ENCODE measurements at regions of chr6 and their contacts with region 1.

Region 1: GRCh38 chr6:34656378-34657036 is 40.1 kb downstream of the ILRUN start:
- DNase-seq: no peak
- H3K4me3 ChIP-seq: peak overlapping the region in 1 of 3 donors; percentile 18
- H3K27ac ChIP-seq: peak overlapping the region; percentile 90 to 97 (median 92)
- H3K4me1 ChIP-seq: peaks cover 38 to 50% of the 10 kb centered on the region in 2 donors
- H3K27me3 ChIP-seq: no peaks in the 10 kb centered on the region
- CTCF ChIP-seq: no peak
- POLR2A ChIP-seq: no peak

Region 2: GRCh38 chr6:34696739-34697543 is 40.4 kb after region 1 on chr6 and contains the start of gene ILRUN:
- intact Hi-C with region 1: loop called (anchors 5 kb)
- DNase-seq: peak; percentile 93 to 96
- H3K4me3 ChIP-seq: peak within 1 kb of the TSS; percentile 18 to 90 (median 76)
- H3K27ac ChIP-seq: peak within 1 kb of the TSS; percentile 62 to 96 (median 89)
- H3K4me1 ChIP-seq: peaks cover 33 to 36% of the 10 kb centered on the region in 2 donors
- H3K27me3 ChIP-seq: no peaks in the 10 kb centered on the region
- CTCF ChIP-seq: no peak
- POLR2A ChIP-seq: peak; percentile 35 to 86
- total RNA-seq, gene ILRUN: 76.5 to 107 (median 89.0) TPM

Region 3: DNA sequence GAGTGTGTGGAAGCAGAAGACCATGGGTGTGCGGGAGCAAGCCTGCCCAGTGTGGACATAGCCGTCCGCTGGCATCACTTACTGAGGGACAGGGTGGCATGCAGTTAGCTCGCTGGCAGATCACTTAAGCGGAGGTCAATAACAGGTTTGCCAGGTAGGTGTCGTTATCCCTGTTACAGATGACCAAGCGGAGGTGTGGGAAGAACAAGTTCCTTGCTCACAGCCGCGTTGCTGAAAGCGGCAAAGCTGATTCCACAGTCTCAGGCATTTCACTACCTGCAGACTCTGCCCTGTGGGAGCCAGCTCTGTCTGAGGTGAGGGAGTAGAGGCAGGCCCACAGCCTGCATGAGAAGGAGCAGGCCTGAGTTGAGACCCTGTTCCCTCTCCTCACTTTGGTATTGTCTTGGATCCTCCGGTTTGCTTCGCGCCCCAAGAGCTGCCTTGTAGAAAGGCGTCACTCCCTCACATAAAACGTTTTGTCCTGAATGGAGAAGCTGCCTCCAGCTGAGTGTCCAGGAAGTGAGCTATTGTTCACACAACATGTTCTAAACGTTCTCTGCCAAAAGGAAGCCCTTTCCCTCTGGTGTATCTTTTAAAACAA is 387.7 kb after region 1 on chr6:
- intact Hi-C with region 1: no loop called
- DNase-seq: peak; percentile 78 to 81
- H3K4me3 ChIP-seq: no peak overlapping the region
- H3K27ac ChIP-seq: peak overlapping the region; percentile 49 to 84 (median 60)
- H3K4me1 ChIP-seq: peaks cover 75 to 94% of the 10 kb centered on the region in 2 donors
- H3K27me3 ChIP-seq: no peaks in the 10 kb centered on the region
- CTCF ChIP-seq: peak in 2 of 6 experiments; percentile 5 to 12
- POLR2A ChIP-seq: peak in 1 of 2 donors; percentile 27

Measured in thyroid gland (tissue), 4 donors.